Breast epithelium (tissue), 4 donors: ENCODE measurements at regions of chr18 and their contacts with region 1.

Region 1: GRCh38 chr18:42807887-42808286 is 307.6 kb downstream of the RIT2 start:
- DNase-seq: no peak
- H3K4me3 ChIP-seq: no peak overlapping the region
- H3K27ac ChIP-seq: no peak overlapping the region
- H3K4me1 ChIP-seq: no peaks in the 10 kb centered on the region
- H3K27me3 ChIP-seq: no peaks in the 10 kb centered on the region
- CTCF ChIP-seq: no peak
- POLR2A ChIP-seq: no peak

Region 2: GRCh38 chr18:42649331-42650035 is 158.4 kb before region 1 on chr18:
- intact Hi-C with region 1: loop called (anchors 5 kb)
- DNase-seq: no peak
- H3K4me3 ChIP-seq: no peak overlapping the region
- H3K27ac ChIP-seq: no peak overlapping the region
- H3K4me1 ChIP-seq: no peaks in the 10 kb centered on the region
- H3K27me3 ChIP-seq: no peaks in the 10 kb centered on the region
- CTCF ChIP-seq: no peak
- POLR2A ChIP-seq: no peak

Region 3: DNA sequence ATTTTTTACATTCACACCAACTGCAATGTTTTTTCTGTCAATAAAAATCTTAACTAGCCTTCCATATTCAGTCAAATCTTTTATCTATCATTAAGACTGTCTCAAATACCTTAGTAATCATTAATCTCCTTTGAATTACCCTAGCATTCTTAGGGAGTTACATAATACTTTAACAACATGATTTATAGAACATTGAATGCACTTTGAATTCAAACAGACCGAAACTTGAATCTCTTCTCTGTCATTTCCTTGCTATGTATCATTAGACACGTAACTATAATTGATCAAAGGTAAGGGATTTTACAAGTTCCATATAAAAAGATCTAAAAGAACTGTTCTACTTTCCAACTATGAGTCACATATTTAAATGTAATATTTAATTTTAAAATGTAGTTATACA is 23.3 kb before region 1 on chr18:
- intact Hi-C with region 1: no loop called
- DNase-seq: no peak
- H3K4me3 ChIP-seq: no peak overlapping the region
- H3K27ac ChIP-seq: no peak overlapping the region
- H3K4me1 ChIP-seq: no peaks in the 10 kb centered on the region
- H3K27me3 ChIP-seq: no peaks in the 10 kb centered on the region
- CTCF ChIP-seq: no peak
- POLR2A ChIP-seq: no peak